Panc1 (cell line): ENCODE measurements at regions of chr7 and their contacts with region 1.

Region 1: GRCh38 chr7:111741811-111742240 is 179.5 kb upstream of the IMMP2L start:
- DNase-seq: no peak
- ATAC-seq: peak; percentile 93
- H3K4me3 ChIP-seq: no peak overlapping the region
- H3K27ac ChIP-seq: no peak overlapping the region
- H3K4me1 ChIP-seq: no peaks in the 10 kb centered on the region
- H3K27me3 ChIP-seq: no peaks in the 10 kb centered on the region
- CTCF ChIP-seq: peak; percentile 80

Region 2: GRCh38 chr7:111697776-111698175 is 44.0 kb before region 1 on chr7:
- CTCF ChIA-PET with region 1: no interaction called
- POLR2A ChIA-PET with region 1: no interaction called
- in situ Hi-C with region 1: no loop called
- intact Hi-C with region 1: no loop called
- DNase-seq: no peak
- ATAC-seq: no peak
- H3K4me3 ChIP-seq: no peak overlapping the region
- H3K27ac ChIP-seq: no peak overlapping the region
- H3K4me1 ChIP-seq: no peaks in the 10 kb centered on the region
- H3K27me3 ChIP-seq: no peaks in the 10 kb centered on the region
- CTCF ChIP-seq: no peak

Region 3: DNA sequence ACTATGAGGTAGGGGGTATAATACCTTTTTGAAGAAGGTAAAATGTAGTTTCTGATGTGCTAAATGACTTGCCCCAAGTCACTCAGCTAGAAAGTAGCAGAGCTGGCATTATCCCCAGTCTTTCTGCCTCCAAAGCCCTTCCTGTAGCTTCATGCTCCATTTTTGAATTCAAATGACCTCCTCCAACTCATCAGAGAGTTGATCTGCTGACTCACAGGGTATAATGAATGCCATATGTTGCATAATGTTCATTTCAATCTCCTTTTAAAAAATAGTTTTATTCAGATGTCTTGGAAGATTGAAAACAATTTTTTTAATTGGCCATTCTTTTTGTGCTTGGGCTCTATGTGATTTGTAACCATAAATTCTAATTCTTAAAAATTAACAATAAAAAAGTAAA is 93.2 kb after region 1 on chr7:
- CTCF ChIA-PET with region 1: no interaction called
- POLR2A ChIA-PET with region 1: no interaction called
- in situ Hi-C with region 1: no loop called
- intact Hi-C with region 1: no loop called
- DNase-seq: no peak
- ATAC-seq: no peak
- H3K4me3 ChIP-seq: no peak overlapping the region
- H3K27ac ChIP-seq: no peak overlapping the region
- H3K4me1 ChIP-seq: no peaks in the 10 kb centered on the region
- H3K27me3 ChIP-seq: no peaks in the 10 kb centered on the region
- CTCF ChIP-seq: no peak

Region 4: GRCh38 chr7:111855161-111855856 is 113.5 kb after region 1 on chr7:
- CTCF ChIA-PET with region 1: no interaction called
- POLR2A ChIA-PET with region 1: no interaction called
- in situ Hi-C with region 1: no loop called
- intact Hi-C with region 1: loop called (anchors 5 kb)
- DNase-seq: peak; percentile 25
- ATAC-seq: peak; percentile 66
- H3K4me3 ChIP-seq: no peak overlapping the region
- H3K27ac ChIP-seq: no peak overlapping the region
- H3K4me1 ChIP-seq: no peaks in the 10 kb centered on the region
- H3K27me3 ChIP-seq: no peaks in the 10 kb centered on the region
- CTCF ChIP-seq: peak; percentile 73

Region 5: GRCh38 chr7:112362731-112363131 is 620.9 kb after region 1 on chr7:
- CTCF ChIA-PET with region 1: no interaction called
- POLR2A ChIA-PET with region 1: no interaction called
- in situ Hi-C with region 1: no loop called
- intact Hi-C with region 1: no loop called
- DNase-seq: no peak
- ATAC-seq: no peak
- H3K4me3 ChIP-seq: no peak overlapping the region
- H3K27ac ChIP-seq: no peak overlapping the region
- H3K4me1 ChIP-seq: no peaks in the 10 kb centered on the region
- H3K27me3 ChIP-seq: no peaks in the 10 kb centered on the region
- CTCF ChIP-seq: no peak

Region 6: GRCh38 chr7:112414855-112415490 is 673.1 kb after region 1 on chr7:
- CTCF ChIA-PET with region 1: no interaction called
- POLR2A ChIA-PET with region 1: no interaction called
- in situ Hi-C with region 1: no loop called
- intact Hi-C with region 1: loop called (anchors 5 kb)
- DNase-seq: no peak
- ATAC-seq: peak; percentile 89
- H3K4me3 ChIP-seq: no peak overlapping the region
- H3K27ac ChIP-seq: no peak overlapping the region
- H3K4me1 ChIP-seq: no peaks in the 10 kb centered on the region
- H3K27me3 ChIP-seq: 0 out of 2 replicates have a peak, but pooled peaks cover 4% of the 10 kb centered on the region
- CTCF ChIP-seq: peak; percentile 75

Region 7: DNA sequence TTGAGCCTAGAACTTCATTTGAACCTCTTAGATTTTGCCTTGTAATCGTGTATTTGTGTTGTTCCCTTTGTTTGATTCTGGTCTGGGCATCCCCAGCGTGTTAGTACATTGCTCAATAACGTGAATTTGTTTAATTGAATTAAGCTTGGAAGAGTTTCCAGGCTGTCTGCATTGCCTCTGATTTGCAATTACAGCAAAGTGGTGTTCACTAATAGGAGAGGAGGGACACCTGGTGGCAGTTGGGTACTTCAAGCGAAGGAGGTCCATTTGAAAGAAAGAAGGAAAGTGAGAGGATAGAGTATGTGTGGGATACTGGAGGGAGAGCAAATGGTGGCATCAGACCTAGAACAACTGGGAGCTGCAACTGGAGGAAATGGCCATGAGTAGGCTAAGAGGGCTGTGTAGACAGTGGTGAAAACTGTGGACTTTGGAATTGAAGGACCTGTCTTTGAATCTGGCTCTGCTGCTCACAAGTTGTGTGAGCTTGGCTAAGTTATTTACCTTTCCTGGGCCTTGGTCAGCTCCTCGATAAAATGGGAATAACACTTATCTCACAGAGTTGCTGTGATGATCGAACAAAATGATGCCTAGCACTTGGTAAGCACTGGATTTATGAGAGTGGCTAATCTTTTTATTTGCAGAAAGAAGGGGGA is 754.1 kb after region 1 on chr7:
- CTCF ChIA-PET with region 1: no interaction called
- POLR2A ChIA-PET with region 1: no interaction called
- in situ Hi-C with region 1: no loop called
- intact Hi-C with region 1: loop called (anchors 5 kb)
- DNase-seq: peak; percentile 74
- ATAC-seq: peak; percentile 94
- H3K4me3 ChIP-seq: no peak overlapping the region
- H3K27ac ChIP-seq: no peak overlapping the region
- H3K4me1 ChIP-seq: peaks cover 3% of the 10 kb centered on the region; the same call in 1 of the 2 replicates
- H3K27me3 ChIP-seq: peaks cover 6% of the 10 kb centered on the region; the same call in 1 of the 2 replicates
- CTCF ChIP-seq: peak; percentile 79